ENCODE measurements at regions of chr12 and their contacts with region 1.

Region 1: DNA sequence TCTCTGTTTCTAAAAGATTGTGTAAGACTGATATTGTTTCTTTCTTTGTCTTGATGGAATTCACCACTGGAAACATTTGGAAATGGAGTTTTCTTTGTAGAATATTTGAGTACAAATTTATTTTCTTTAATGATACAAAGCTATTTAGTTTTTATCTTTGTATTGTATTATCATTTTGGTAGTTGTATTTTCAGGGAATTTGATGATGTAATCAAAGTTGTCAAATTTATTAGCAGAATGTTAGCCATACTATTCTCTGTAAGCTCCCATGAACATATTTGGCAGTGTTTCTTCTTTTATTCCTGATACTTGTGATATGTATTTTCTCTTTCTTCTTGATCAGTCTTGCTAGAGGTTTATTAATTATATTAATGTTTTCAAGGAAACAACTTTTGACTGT is 129.6 kb upstream of the NAV3 start:
- DNase-seq: no peak
- ATAC-seq: no peak
- H3K4me3 ChIP-seq: no peak overlapping the region
- H3K4me3 Mint-ChIP-seq: no peak overlapping the region
- H3K27ac ChIP-seq: no peak overlapping the region
- H3K27ac Mint-ChIP-seq: no peak overlapping the region
- H3K4me1 ChIP-seq: no peaks in the 10 kb centered on the region
- H3K4me1 Mint-ChIP-seq: no peaks in the 10 kb centered on the region
- H3K27me3 ChIP-seq: no peaks in the 10 kb centered on the region
- H3K27me3 Mint-ChIP-seq: no peaks in the 10 kb centered on the region

Region 2: GRCh38 chr12:77724367-77724957 is 23.4 kb after region 1 on chr12:
- CTCF ChIA-PET with region 1: no interaction called
- POLR2A ChIA-PET with region 1: no interaction called
- intact Hi-C with region 1: loop called in 1 of 2 experiments (anchors 2 kb)
- DNase-seq: no peak
- ATAC-seq: no peak
- H3K4me3 ChIP-seq: no peak overlapping the region
- H3K4me3 Mint-ChIP-seq: no peak overlapping the region
- H3K27ac ChIP-seq: no peak overlapping the region
- H3K27ac Mint-ChIP-seq: no peak overlapping the region
- H3K4me1 ChIP-seq: no peaks in the 10 kb centered on the region
- H3K4me1 Mint-ChIP-seq: no peaks in the 10 kb centered on the region
- H3K27me3 ChIP-seq: no peaks in the 10 kb centered on the region
- H3K27me3 Mint-ChIP-seq: no peaks in the 10 kb centered on the region